Mammary epithelial cell (primary cell): ENCODE measurements at regions of chr19 and their contacts with region 1.

Region 1: GRCh38 chr19:24033301-24033962 is 53.6 kb upstream of the ZNF254 start:
- DNase-seq: peak; percentile 91
- H3K4me3 ChIP-seq: peak overlapping the region; percentile 78 to 88 (median 80)
- H3K27ac ChIP-seq: peak overlapping the region; percentile 90
- H3K4me1 ChIP-seq: peaks cover 8% of the 10 kb centered on the region
- H3K27me3 ChIP-seq: no peaks in the 10 kb centered on the region
- CTCF ChIP-seq: no peak

Region 2: GRCh38 chr19:23273590-23274413 is 759.6 kb before region 1 on chr19:
- CTCF ChIA-PET with region 1: no interaction called
- dilution Hi-C with region 1: no loop called
- in situ Hi-C with region 1: no loop called
- intact Hi-C with region 1: loop called (anchors 10 kb)
- DNase-seq: peak; percentile 87
- H3K4me3 ChIP-seq: peak overlapping the region; percentile 67 to 88 (median 71)
- H3K27ac ChIP-seq: peak overlapping the region; percentile 59
- H3K4me1 ChIP-seq: no peaks in the 10 kb centered on the region
- H3K27me3 ChIP-seq: no peaks in the 10 kb centered on the region
- CTCF ChIP-seq: peak in 1 of 2 donors; percentile 24

Region 3: DNA sequence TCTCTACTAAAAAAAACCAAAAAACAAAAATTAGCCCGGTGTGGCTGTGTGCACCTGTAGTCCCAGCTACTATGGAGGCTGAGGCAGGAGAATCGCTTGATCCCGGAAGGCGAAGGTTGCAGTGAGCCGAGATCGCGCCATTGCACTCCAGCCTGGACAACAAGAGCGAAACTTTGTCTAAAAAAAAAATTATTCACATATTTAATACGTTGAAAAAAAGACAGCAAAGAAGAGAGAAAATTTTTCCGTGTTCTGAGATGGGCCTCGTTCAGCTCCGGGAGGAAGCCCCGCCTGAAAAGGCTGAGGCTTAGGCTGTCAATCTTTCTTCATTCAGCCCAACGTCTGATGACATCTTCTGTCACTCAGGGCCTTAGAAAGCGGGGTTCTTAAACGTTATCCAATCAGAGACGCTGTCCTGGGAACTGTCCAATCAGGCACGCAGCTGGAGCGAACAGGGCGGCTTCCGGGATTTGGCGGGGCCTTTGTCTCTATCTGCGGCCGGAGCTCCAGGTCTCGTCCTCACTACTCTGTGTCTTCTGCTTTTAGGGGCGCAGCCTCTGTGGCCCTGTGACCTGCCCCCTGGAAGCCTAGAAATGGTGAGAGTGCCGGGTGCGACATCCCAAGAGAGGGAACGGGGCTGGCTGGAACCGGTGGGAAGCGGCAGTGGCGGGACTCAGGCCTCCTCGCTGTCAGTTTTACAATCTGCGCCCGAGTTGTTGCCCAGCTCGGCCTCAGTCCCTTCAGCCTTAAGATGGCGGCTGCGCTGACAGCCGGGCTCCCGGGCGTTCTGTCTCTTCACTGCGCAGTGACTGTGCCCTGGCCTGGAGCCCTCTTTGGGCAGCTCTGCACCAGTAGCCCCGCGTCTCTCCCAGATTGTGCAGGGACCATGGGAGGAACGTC is 118.8 kb before region 1 on chr19 and contains the start of gene ZNF726:
- CTCF ChIA-PET with region 1: no interaction called
- dilution Hi-C with region 1: no loop called
- in situ Hi-C with region 1: no loop called
- intact Hi-C with region 1: loop called (anchors 2 kb)
- DNase-seq: peak; percentile 93
- H3K4me3 ChIP-seq: peak within 1 kb of the TSS; percentile 57 to 72 (median 61)
- H3K27ac ChIP-seq: no peak within 1 kb of the TSS
- H3K4me1 ChIP-seq: no peaks in the 10 kb centered on the region
- H3K27me3 ChIP-seq: no peaks in the 10 kb centered on the region
- CTCF ChIP-seq: no peak
- total RNA-seq, gene ZNF726: 2.5 to 4.1 TPM

Region 4: GRCh38 chr19:24004166-24004565 is 29.3 kb before region 1 on chr19:
- CTCF ChIA-PET with region 1: no interaction called
- dilution Hi-C with region 1: no loop called
- in situ Hi-C with region 1: no loop called
- intact Hi-C with region 1: no loop called
- DNase-seq: peak; percentile 35
- H3K4me3 ChIP-seq: no peak overlapping the region
- H3K27ac ChIP-seq: no peak overlapping the region
- H3K4me1 ChIP-seq: no peaks in the 10 kb centered on the region
- H3K27me3 ChIP-seq: no peaks in the 10 kb centered on the region
- CTCF ChIP-seq: no peak

Region 5: GRCh38 chr19:24062190-24062589 is 28.8 kb after region 1 on chr19:
- CTCF ChIA-PET with region 1: no interaction called
- dilution Hi-C with region 1: no loop called
- in situ Hi-C with region 1: no loop called
- intact Hi-C with region 1: no loop called
- DNase-seq: no peak
- H3K4me3 ChIP-seq: no peak overlapping the region
- H3K27ac ChIP-seq: no peak overlapping the region
- H3K4me1 ChIP-seq: no peaks in the 10 kb centered on the region
- H3K27me3 ChIP-seq: no peaks in the 10 kb centered on the region
- CTCF ChIP-seq: no peak

Region 6: DNA sequence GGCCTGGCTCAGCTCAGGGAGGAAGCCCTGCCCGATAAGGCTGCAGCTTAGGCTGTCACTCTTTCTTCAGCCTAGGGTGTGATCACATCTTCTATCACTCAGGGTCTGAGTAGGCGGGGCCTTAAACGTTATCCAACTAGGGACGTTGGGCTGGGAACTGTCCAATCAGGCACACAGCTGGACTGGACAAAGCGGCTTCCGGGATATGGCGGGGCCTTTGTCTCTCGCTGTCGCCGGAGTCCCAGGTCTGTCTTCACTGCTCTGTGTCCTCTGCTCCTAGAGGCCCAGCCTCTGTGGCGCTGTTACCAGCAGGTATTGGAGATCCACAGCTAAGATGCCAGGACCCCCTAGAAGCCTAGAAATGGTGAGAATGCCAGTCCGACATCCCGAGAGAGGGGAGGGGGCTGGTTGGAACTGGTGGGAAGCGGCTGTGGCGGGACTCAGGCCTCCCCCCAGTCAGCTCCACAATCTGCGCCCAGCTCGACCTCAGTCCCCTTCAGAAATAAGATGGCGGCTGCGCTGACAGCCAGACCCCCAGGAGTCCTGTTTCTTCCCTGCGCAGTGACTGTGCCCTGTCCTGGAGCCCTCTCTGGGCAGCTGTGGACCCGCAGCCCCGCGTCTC is 53.7 kb after region 1 on chr19 and contains the start of gene ZNF254:
- CTCF ChIA-PET with region 1: no interaction called
- dilution Hi-C with region 1: no loop called
- in situ Hi-C with region 1: no loop called
- intact Hi-C with region 1: loop called (anchors 1 kb)
- DNase-seq: peak; percentile 91
- H3K4me3 ChIP-seq: peak within 1 kb of the TSS; percentile 74 to 88 (median 78)
- H3K27ac ChIP-seq: peak within 1 kb of the TSS; percentile 87
- H3K4me1 ChIP-seq: no peaks in the 10 kb centered on the region
- H3K27me3 ChIP-seq: no peaks in the 10 kb centered on the region
- CTCF ChIP-seq: no peak
- total RNA-seq, gene ZNF254: 7.4 to 18.3 TPM

Region 7: GRCh38 chr19:24159707-24160106 is 126.3 kb after region 1 on chr19:
- CTCF ChIA-PET with region 1: no interaction called
- dilution Hi-C with region 1: no loop called
- in situ Hi-C with region 1: no loop called
- intact Hi-C with region 1: loop called (anchors 2 kb)
- DNase-seq: peak; percentile 29
- H3K4me3 ChIP-seq: no peak overlapping the region
- H3K27ac ChIP-seq: no peak overlapping the region
- H3K4me1 ChIP-seq: no peaks in the 10 kb centered on the region
- H3K27me3 ChIP-seq: no peaks in the 10 kb centered on the region
- CTCF ChIP-seq: peak; percentile 37 to 76

Region 8: DNA sequence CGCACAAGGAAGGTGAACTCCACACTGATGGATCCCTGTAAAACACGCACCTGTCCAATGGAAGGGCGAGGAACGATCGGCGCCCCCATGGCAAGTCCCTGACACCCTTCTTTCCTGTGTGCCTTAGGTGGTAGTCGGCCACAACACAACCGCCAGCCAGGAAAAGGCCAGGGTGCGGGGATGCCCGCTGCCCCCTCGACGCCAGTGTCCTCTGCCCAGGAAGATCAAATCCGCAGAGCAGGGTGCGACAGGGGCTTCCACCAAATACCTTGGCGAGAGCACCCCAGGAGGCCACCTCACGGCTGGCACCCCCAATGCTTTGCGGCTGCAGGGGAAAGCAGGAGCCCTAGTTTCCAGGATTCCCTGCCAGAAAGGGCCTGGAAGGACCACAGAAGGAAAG is 144.8 kb after region 1 on chr19:
- CTCF ChIA-PET with region 1: no interaction called
- dilution Hi-C with region 1: no loop called
- in situ Hi-C with region 1: no loop called
- intact Hi-C with region 1: no loop called
- DNase-seq: no peak
- H3K4me3 ChIP-seq: no peak overlapping the region
- H3K27ac ChIP-seq: no peak overlapping the region
- H3K4me1 ChIP-seq: no peaks in the 10 kb centered on the region
- H3K27me3 ChIP-seq: no peaks in the 10 kb centered on the region
- CTCF ChIP-seq: no peak